ENCODE measurements at regions of chr4 and their contacts with region 1.

Region 1: GRCh38 chr4:47383829-47384427 is 79.6 kb downstream of the COMMD8 start:
- DNase-seq: no peak
- H3K4me3 ChIP-seq: no peak overlapping the region
- CTCF ChIP-seq: peak; percentile 29

Region 2: DNA sequence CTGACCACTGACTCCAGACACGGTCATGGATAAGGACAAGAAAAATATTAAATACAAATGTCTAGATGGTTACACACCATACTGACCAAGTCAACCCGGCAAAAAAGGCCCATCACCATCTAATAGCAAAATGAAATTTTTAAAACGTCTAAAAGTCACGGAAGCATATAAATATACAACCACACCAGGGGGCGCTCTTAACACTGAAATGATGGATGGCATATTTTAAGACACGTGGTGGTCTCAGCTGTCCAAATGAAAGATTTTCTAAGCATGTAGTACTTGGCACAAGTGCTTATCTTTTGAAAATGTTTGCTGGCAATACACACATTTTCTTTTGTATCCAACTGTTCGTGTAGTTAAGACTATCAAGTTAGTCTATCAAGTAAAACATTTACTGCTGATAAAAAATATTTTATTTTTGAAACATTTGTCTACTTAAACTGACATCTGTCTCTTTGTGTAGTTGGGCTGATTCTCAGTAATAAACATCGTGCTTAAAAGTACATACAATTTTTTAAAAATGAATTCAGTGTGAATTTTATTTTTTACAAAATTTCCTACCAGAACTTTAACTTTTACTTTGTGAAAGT is 539.5 kb before region 1 on chr4:
- CTCF ChIA-PET with region 1: interaction called, 15 read pairs
- POLR2A ChIA-PET with region 1: no interaction called
- DNase-seq: peak; percentile 7
- H3K4me3 ChIP-seq: no peak overlapping the region
- CTCF ChIP-seq: peak; percentile 49

Region 3: GRCh38 chr4:46931981-46932380 is 451.9 kb before region 1 on chr4:
- CTCF ChIA-PET with region 1: interaction called, 40 read pairs
- POLR2A ChIA-PET with region 1: no interaction called
- DNase-seq: no peak
- H3K4me3 ChIP-seq: no peak overlapping the region
- CTCF ChIP-seq: peak; percentile 71

Region 4: DNA sequence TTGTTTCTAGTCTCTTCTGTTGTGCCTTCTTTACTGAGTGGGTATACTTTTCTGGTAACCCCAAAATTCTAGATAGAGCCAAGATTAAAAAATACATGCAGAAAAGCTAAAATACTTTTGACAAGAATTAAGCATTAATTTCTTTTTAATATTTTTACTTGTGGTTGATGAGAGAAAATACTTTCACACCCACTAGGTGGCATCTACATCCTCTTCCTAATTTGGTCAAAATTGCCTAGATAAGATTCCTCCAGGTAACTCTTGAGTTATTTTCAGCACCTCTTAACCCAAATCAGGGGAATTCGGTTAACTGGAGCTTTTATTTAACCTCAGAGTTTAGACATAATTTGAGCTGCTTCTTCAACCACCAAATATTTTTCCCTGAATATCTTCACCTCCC is 446.4 kb before region 1 on chr4:
- CTCF ChIA-PET with region 1: interaction called, 40 read pairs
- POLR2A ChIA-PET with region 1: no interaction called
- DNase-seq: no peak
- H3K4me3 ChIP-seq: no peak overlapping the region
- CTCF ChIP-seq: no peak

Region 5: GRCh38 chr4:47368211-47368610 is 15.7 kb before region 1 on chr4:
- CTCF ChIA-PET with region 1: interaction called, 12 read pairs
- POLR2A ChIA-PET with region 1: no interaction called
- DNase-seq: no peak
- H3K4me3 ChIP-seq: no peak overlapping the region
- CTCF ChIP-seq: no peak

Region 6: DNA sequence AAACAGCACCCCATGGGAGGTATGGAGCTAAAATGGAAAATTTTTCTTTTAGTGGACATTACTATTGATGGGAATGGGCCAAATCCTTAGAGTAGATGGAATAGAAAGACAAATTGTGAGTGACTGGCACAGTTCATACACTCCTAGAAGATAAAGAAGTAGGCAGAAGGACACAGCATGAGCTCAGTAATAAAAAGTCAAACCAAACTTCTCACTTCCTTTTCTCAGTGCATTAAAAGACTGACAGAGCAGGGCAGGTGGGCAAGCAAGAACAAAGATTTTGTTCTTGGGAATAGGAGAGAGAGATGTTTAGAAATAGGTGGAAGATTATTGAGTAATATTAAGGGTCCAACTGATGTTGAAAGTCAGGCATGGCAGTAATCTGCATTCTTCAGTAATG is 233.7 kb after region 1 on chr4:
- CTCF ChIA-PET with region 1: no interaction called
- POLR2A ChIA-PET with region 1: no interaction called
- DNase-seq: no peak
- H3K4me3 ChIP-seq: no peak overlapping the region
- CTCF ChIP-seq: no peak

Measured in AG04449 (cell line).